ENCODE measurements at regions of chr2 and their contacts with region 1.

Region 1: GRCh38 chr2:238160206-238161109 is 1.7 kb downstream of the ERFE start:
- DNase-seq: no peak
- H3K4me3 Mint-ChIP-seq: no peak overlapping the region
- H3K27ac Mint-ChIP-seq: no peak overlapping the region
- H3K4me1 Mint-ChIP-seq: peaks cover 4% of the 10 kb centered on the region
- H3K27me3 Mint-ChIP-seq: peaks cover 25% of the 10 kb centered on the region

Region 2: DNA sequence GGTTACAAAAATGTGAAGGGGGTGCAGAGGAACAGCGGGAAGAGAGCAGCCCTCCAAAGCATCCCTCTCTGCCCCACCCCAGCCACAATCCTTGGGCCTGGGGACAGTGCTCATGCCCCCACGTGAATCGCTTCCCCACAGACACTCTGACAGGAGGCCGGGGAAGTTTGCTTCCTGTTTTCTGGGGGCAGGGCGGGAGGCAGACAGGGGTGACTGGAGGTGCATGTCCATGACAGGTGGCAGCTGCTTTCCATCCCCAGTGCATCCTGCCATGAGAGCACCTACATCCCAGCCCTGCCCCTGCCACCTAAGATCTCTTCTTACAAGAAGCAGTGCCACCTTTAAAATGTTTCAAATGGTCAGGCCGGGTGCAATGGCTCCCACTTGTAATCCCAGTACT is 240.9 kb before region 1 on chr2:
- intact Hi-C with region 1: no loop called
- DNase-seq: no peak
- H3K4me3 Mint-ChIP-seq: no peak overlapping the region
- H3K27ac Mint-ChIP-seq: no peak overlapping the region
- H3K4me1 Mint-ChIP-seq: peaks cover 7% of the 10 kb centered on the region
- H3K27me3 Mint-ChIP-seq: peaks cover 2% of the 10 kb centered on the region

Region 3: DNA sequence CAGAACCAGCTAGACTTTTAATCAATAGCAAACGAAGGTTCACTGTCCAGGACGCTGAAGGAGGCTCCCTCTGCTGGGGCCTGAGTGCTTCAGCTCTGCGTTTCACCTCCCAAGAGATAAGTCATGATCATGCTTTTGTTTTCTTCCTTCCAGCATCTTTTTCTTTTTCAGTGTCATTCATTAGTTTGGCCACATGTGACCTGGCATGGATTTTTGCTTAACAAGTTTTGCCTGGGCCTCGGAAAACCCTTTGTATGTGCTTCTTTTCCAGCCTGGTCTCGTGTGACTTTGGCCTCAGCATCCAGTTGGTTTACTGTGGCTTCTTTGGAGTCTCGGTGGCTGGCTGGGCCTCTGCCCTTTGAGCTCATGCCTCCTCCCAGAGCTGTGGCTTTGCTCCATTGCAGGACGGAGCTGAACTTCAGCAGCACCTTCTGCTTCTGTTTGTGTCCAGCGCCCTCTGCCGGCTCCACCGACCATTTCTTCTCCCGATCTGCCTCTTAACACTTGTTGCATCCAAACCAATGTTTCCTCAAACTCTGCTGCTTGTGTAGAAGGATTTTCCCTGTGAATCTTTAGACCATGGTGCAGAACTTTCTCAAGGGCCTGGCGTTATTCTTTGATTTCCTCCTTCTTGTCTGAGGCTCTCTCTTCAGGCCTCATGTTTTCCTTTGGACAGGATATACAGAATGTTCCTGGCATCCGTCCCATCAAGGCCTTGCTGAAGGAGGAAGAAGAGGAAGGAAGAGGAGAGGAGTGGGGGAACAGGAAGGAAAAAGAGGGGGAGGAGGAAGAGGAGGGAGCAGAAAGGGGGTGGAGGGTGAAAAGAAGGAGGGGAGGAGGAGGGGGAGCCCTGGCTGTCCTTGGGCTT is 103.0 kb after region 1 on chr2:
- intact Hi-C with region 1: loop called (anchors 5 kb)
- DNase-seq: peak; percentile 65
- H3K4me3 Mint-ChIP-seq: no peak overlapping the region
- H3K27ac Mint-ChIP-seq: no peak overlapping the region
- H3K4me1 Mint-ChIP-seq: peaks cover 9% of the 10 kb centered on the region
- H3K27me3 Mint-ChIP-seq: no peaks in the 10 kb centered on the region